Heart left ventricle (tissue), 16 donors: ENCODE measurements at regions of chr7 and their contacts with region 1.

Region 1: GRCh38 chr7:158317238-158318205 is 270.1 kb downstream of the PTPRN2 start:
- DNase-seq: peak in 2 of 5 donors; percentile 31 to 51
- ATAC-seq: peak in 3 of 4 donors; percentile 47 to 52 (median 47)
- H3K4me3 ChIP-seq: peak overlapping the region in 10 of 12 donors; percentile 3 to 46 (median 18)
- H3K27ac ChIP-seq: peak overlapping the region in 6 of 12 donors; percentile 8 to 72 (median 56)
- H3K4me1 ChIP-seq: peaks cover 0 to 17% (median 0%) of the 10 kb centered on the region in 12 donors
- H3K27me3 ChIP-seq: peaks cover 0 to 46% (median 15%) of the 10 kb centered on the region in 9 donors
- CTCF ChIP-seq: peak in 2 of 12 donors; percentile 14 to 20
- POLR2A ChIP-seq: no peak

Region 2: DNA sequence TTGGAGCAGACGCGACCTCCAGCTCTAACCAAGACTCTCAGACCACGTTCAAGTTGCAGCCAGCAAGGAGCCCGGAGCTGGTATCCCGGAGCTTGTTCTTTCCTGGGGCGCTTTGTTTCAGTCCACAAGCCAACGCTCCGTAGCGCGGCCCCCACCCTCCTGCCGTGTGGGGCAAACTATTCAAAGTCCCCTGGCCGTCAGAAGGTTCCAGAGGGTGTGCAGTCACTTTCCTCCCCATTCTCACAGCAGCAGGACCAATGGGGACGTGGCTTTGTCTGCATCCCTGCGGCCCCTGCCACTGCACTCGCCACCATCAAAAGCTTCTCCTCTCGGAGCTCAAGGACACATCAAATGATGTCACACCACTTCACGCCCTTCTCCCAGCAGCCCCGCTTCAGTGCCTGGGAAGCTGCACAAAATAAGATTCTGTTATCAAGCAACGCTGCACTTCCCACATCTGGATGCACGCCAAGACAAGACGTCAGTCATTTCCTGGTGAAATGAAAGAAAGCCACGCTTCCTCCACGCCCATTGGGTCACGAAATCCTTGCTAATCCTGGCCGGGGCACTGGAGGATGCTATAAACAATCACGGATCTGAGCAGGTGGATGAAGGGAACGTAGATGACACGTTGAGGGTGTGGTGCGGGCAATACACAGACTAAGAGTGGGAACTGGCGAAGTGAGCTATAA is 78.1 kb before region 1 on chr7:
- intact Hi-C with region 1: loop called in 1 of 10 experiments (anchors 2 kb)
- DNase-seq: peak in 4 of 5 donors; percentile 47 to 74 (median 60)
- ATAC-seq: peak in 3 of 4 donors; percentile 31 to 72 (median 51)
- H3K4me3 ChIP-seq: peak overlapping the region in 5 of 12 donors; percentile 3 to 31 (median 19)
- H3K27ac ChIP-seq: peak overlapping the region in 4 of 12 donors; percentile 32 to 52 (median 43)
- H3K4me1 ChIP-seq: no peaks in the 10 kb centered on the region
- H3K27me3 ChIP-seq: no peaks in the 10 kb centered on the region
- CTCF ChIP-seq: no peak
- POLR2A ChIP-seq: no peak